ENCODE measurements at regions of chr4 and their contacts with region 1.

Region 1: GRCh38 chr4:24419181-24420034 is 164.9 kb downstream of the DHX15 start:
- DNase-seq: peak; percentile 47
- ATAC-seq: peak; percentile 92
- H3K4me3 ChIP-seq: no peak overlapping the region
- H3K27ac ChIP-seq: no peak overlapping the region
- H3K4me1 ChIP-seq: no peaks in the 10 kb centered on the region
- H3K27me3 ChIP-seq: no peaks in the 10 kb centered on the region
- CTCF ChIP-seq: peak; percentile 91
- EP300 ChIP-seq: no peak
- POLR2A ChIP-seq: no peak
- RAD21 ChIP-seq: peak; percentile 81

Region 2: GRCh38 chr4:22897520-22898108 is 1521.8 kb before region 1 on chr4:
- CTCF ChIA-PET with region 1: no interaction called
- POLR2A ChIA-PET with region 1: no interaction called
- in situ Hi-C with region 1: no loop called
- intact Hi-C with region 1: loop called (anchors 2 kb)
- DNase-seq: peak; percentile 16
- ATAC-seq: peak; percentile 66
- H3K4me3 ChIP-seq: no peak overlapping the region
- H3K27ac ChIP-seq: no peak overlapping the region
- H3K4me1 ChIP-seq: peaks cover 22% of the 10 kb centered on the region
- H3K27me3 ChIP-seq: no peaks in the 10 kb centered on the region
- CTCF ChIP-seq: peak; percentile 62
- EP300 ChIP-seq: no peak
- POLR2A ChIP-seq: no peak
- RAD21 ChIP-seq: no peak

Region 3: GRCh38 chr4:23135792-23136645 is 1283.4 kb before region 1 on chr4:
- CTCF ChIA-PET with region 1: interaction called, 8 read pairs
- POLR2A ChIA-PET with region 1: no interaction called
- in situ Hi-C with region 1: no loop called
- intact Hi-C with region 1: loop called (anchors 10 kb)
- DNase-seq: peak; percentile 35
- ATAC-seq: peak; percentile 73
- H3K4me3 ChIP-seq: no peak overlapping the region
- H3K27ac ChIP-seq: no peak overlapping the region
- H3K4me1 ChIP-seq: no peaks in the 10 kb centered on the region
- H3K27me3 ChIP-seq: no peaks in the 10 kb centered on the region; a peak in 1 of 5 replicates
- CTCF ChIP-seq: peak; percentile 60
- EP300 ChIP-seq: no peak
- POLR2A ChIP-seq: no peak
- RAD21 ChIP-seq: no peak

Region 4: GRCh38 chr4:23337292-23337691 is 1082.1 kb before region 1 on chr4:
- CTCF ChIA-PET with region 1: no interaction called
- POLR2A ChIA-PET with region 1: no interaction called
- in situ Hi-C with region 1: no loop called
- intact Hi-C with region 1: loop called (anchors 2 kb)
- DNase-seq: no peak
- ATAC-seq: peak; percentile 44; the same call in 2 of the 3 replicates
- H3K4me3 ChIP-seq: no peak overlapping the region
- H3K27ac ChIP-seq: no peak overlapping the region
- H3K4me1 ChIP-seq: no peaks in the 10 kb centered on the region
- H3K27me3 ChIP-seq: no peaks in the 10 kb centered on the region
- CTCF ChIP-seq: no peak
- EP300 ChIP-seq: no peak
- POLR2A ChIP-seq: no peak
- RAD21 ChIP-seq: no peak

Region 5: GRCh38 chr4:23680671-23681518 is 738.5 kb before region 1 on chr4:
- CTCF ChIA-PET with region 1: interaction called, 5 read pairs
- POLR2A ChIA-PET with region 1: no interaction called
- in situ Hi-C with region 1: loop called (anchors 25 kb)
- intact Hi-C with region 1: loop called (anchors 1 kb)
- DNase-seq: no peak
- ATAC-seq: no peak
- H3K4me3 ChIP-seq: no peak overlapping the region
- H3K27ac ChIP-seq: no peak overlapping the region
- H3K4me1 ChIP-seq: no peaks in the 10 kb centered on the region
- H3K27me3 ChIP-seq: no peaks in the 10 kb centered on the region
- CTCF ChIP-seq: peak; percentile 21; the same call in 1 of the 2 replicates
- EP300 ChIP-seq: no peak
- POLR2A ChIP-seq: no peak
- RAD21 ChIP-seq: no peak

Region 6: GRCh38 chr4:23775694-23776093 is 643.7 kb before region 1 on chr4:
- CTCF ChIA-PET with region 1: no interaction called
- POLR2A ChIA-PET with region 1: no interaction called
- in situ Hi-C with region 1: no loop called
- intact Hi-C with region 1: loop called (anchors 5 kb)
- DNase-seq: peak; percentile 37
- ATAC-seq: peak; percentile 86
- H3K4me3 ChIP-seq: no peak overlapping the region
- H3K27ac ChIP-seq: no peak overlapping the region
- H3K4me1 ChIP-seq: no peaks in the 10 kb centered on the region
- H3K27me3 ChIP-seq: no peaks in the 10 kb centered on the region
- CTCF ChIP-seq: peak; percentile 44; the same call in 1 of the 2 replicates
- EP300 ChIP-seq: no peak
- POLR2A ChIP-seq: no peak
- RAD21 ChIP-seq: peak; percentile 18; the same call in 1 of the 2 replicates

Region 7: GRCh38 chr4:24889991-24890390 is 470.6 kb after region 1 on chr4:
- CTCF ChIA-PET with region 1: no interaction called
- POLR2A ChIA-PET with region 1: no interaction called
- in situ Hi-C with region 1: no loop called
- intact Hi-C with region 1: no loop called
- DNase-seq: no peak
- ATAC-seq: no peak
- H3K4me3 ChIP-seq: no peak overlapping the region
- H3K27ac ChIP-seq: no peak overlapping the region
- H3K4me1 ChIP-seq: no peaks in the 10 kb centered on the region
- H3K27me3 ChIP-seq: no peaks in the 10 kb centered on the region
- CTCF ChIP-seq: no peak
- EP300 ChIP-seq: no peak
- POLR2A ChIP-seq: no peak
- RAD21 ChIP-seq: no peak

Measured in HepG2 (cell line).